Spleen (tissue), 13 donors: ENCODE measurements at regions of chrX and their contacts with region 1.

Region 1: DNA sequence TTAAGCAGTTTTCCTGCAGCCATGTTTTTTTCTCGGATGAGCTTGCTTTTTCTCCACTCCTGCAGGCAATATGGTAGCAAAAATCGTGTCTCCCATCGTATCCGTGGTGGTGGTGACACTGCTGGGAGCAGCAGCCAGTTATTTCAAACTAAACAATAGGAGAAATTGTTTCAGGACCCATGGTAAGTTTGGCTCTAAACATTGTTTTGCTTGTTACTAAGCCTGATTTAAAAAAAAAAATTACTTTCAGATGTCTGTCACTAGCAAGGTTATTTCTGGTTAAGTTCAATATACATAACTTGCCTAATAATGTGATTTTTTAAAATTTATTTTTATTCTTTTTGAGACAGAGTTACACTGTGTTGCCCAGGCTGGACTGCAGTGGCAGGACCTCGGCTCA is 17.5 kb upstream of the GYG2 start:
- DNase-seq: no peak
- H3K4me3 ChIP-seq: no peak overlapping the region
- H3K27ac ChIP-seq: no peak overlapping the region
- H3K4me1 ChIP-seq: peaks cover 0 to 3% (median 0%) of the 10 kb centered on the region in 6 donors
- H3K27me3 ChIP-seq: no peaks in the 10 kb centered on the region
- CTCF ChIP-seq: no peak
- POLR2A ChIP-seq: no peak

Region 2: GRCh38 chrX:2640275-2641150 is 170.8 kb before region 1 on chrX:
- intact Hi-C with region 1: loop called (anchors 5 kb)
- DNase-seq: no peak
- H3K4me3 ChIP-seq: no peak overlapping the region
- H3K27ac ChIP-seq: no peak overlapping the region
- H3K4me1 ChIP-seq: no peaks in the 10 kb centered on the region
- H3K27me3 ChIP-seq: no peaks in the 10 kb centered on the region
- CTCF ChIP-seq: no peak
- POLR2A ChIP-seq: no peak